ENCODE measurements at regions of chrX and their contacts with region 1.

Region 1: GRCh38 chrX:119427024-119427794 is 28.1 kb downstream of the SLC25A43 start:
- DNase-seq: no peak
- ATAC-seq: no peak
- H3K4me3 ChIP-seq: no peak overlapping the region
- H3K27ac ChIP-seq: no peak overlapping the region
- H3K4me1 ChIP-seq: no peaks in the 10 kb centered on the region
- H3K27me3 ChIP-seq: no peaks in the 10 kb centered on the region
- CTCF ChIP-seq: no peak

Region 2: GRCh38 chrX:118207831-118208453 is 1219.3 kb before region 1 on chrX:
- CTCF ChIA-PET with region 1: no interaction called
- POLR2A ChIA-PET with region 1: no interaction called
- in situ Hi-C with region 1: no loop called
- intact Hi-C with region 1: no loop called
- DNase-seq: no peak
- ATAC-seq: no peak
- H3K4me3 ChIP-seq: no peak overlapping the region
- H3K27ac ChIP-seq: no peak overlapping the region
- H3K4me1 ChIP-seq: no peaks in the 10 kb centered on the region
- H3K27me3 ChIP-seq: no peaks in the 10 kb centered on the region
- CTCF ChIP-seq: no peak

Region 3: DNA sequence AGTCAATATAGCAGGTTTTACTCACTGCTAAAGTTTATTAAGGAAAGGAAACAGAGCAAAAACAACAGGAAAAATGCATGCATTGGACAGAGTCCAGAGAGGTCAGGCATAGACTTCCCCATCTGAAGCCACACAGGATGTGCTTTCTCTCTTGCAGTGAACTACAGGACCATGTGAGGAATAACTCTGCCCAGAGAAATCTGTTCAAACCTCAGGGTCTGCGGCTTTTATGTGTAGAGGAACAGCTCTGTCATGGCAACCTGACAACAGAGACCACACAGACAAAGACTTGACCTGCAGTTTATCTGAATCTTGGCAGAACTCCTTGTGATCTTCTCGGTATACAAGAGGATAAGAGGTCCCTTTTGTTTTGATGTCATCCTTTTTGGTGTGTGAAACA is 499.1 kb before region 1 on chrX:
- CTCF ChIA-PET with region 1: no interaction called
- POLR2A ChIA-PET with region 1: no interaction called
- in situ Hi-C with region 1: no loop called
- intact Hi-C with region 1: no loop called
- DNase-seq: no peak
- ATAC-seq: no peak
- H3K4me3 ChIP-seq: no peak overlapping the region
- H3K27ac ChIP-seq: no peak overlapping the region
- H3K4me1 ChIP-seq: no peaks in the 10 kb centered on the region
- H3K27me3 ChIP-seq: no peaks in the 10 kb centered on the region
- CTCF ChIP-seq: no peak

Region 4: DNA sequence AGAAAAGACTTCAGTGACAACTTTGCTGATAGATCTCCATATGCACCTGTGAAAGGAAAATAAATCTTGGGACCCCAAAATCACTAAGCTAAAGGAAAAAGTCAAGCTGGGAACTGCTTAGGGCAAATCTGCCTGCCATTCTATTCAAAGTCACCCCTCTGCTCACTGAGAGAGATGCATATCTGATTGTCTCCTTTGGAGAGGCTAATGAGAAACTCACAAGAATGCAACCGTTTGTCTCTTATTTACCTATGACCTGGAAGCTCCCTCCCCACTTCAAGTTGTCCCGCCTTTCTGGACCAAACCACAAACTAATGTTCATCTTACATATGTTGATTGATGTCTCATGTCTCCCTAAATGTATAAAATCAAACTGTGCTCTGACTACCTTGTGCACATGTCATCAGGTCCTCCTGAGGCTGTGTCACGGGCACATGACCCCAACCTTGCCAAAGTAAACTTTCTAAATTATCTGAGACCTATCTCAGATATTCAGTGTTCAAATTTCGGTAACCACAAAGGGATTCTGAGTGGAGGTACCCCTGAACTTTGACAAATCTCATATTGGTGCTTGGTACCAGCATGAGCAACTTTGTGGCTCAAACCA is 117.4 kb before region 1 on chrX:
- CTCF ChIA-PET with region 1: no interaction called
- POLR2A ChIA-PET with region 1: interaction called, 11 read pairs
- in situ Hi-C with region 1: no loop called
- intact Hi-C with region 1: no loop called
- DNase-seq: no peak
- ATAC-seq: no peak
- H3K4me3 ChIP-seq: no peak overlapping the region
- H3K27ac ChIP-seq: no peak overlapping the region
- H3K4me1 ChIP-seq: no peaks in the 10 kb centered on the region
- H3K27me3 ChIP-seq: peaks cover 2% of the 10 kb centered on the region; the same call in 1 of the 2 replicates
- CTCF ChIP-seq: no peak

Region 5: DNA sequence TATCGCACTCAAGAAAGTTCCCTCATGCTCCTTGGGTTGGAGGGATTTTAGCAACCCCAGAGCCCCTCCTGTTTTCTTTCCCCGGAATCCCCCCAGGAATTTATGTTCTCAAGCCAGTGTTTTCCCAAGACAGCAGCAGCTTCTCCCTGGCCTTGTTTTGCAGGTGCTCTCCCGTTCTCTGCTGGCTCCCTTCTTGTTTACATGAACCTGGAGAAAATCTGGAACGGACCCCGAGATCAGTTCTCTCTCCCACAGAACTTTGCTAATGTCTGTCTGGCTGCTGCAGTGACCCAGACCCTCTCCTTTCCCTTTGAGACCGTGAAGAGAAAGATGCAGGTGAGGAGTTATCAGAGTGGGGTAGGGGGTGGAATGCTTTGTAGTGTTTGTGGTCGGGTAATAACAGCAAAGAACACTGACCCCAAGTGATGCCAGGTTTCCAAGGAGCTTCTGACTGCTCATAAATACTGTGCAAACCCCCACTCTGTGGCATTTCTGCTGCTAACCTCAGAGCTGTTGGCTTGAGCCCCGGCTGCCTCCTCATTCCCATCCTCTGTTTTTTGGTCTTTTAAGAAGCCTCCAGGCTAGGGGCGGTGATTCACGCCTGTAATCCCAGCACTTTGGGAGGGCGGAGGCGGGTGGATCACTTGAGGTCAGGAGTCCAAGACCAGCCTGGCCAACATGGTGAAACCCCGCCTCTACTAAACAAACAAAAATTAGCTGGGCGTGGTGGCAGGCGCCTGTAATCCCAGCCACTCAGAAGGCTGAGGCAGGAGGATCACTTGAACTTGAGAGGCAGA is 17.0 kb before region 1 on chrX:
- CTCF ChIA-PET with region 1: no interaction called
- POLR2A ChIA-PET with region 1: interaction called, 10 read pairs
- in situ Hi-C with region 1: no loop called
- intact Hi-C with region 1: no loop called
- DNase-seq: no peak
- ATAC-seq: no peak; the same call in 1 of the 2 replicates
- H3K4me3 ChIP-seq: 0 out of 4 replicates have a peak overlapping the region, but pooled peaks of 1 of the 2 experiments have one; percentile 6
- H3K27ac ChIP-seq: no peak overlapping the region
- H3K4me1 ChIP-seq: no peaks in the 10 kb centered on the region
- H3K27me3 ChIP-seq: no peaks in the 10 kb centered on the region
- CTCF ChIP-seq: no peak

Region 6: GRCh38 chrX:119442286-119442685 is 15.1 kb after region 1 on chrX:
- CTCF ChIA-PET with region 1: no interaction called
- POLR2A ChIA-PET with region 1: interaction called, 15 read pairs
- in situ Hi-C with region 1: no loop called
- intact Hi-C with region 1: no loop called
- DNase-seq: no peak
- ATAC-seq: no peak
- H3K4me3 ChIP-seq: no peak overlapping the region
- H3K27ac ChIP-seq: no peak overlapping the region
- H3K4me1 ChIP-seq: no peaks in the 10 kb centered on the region
- H3K27me3 ChIP-seq: no peaks in the 10 kb centered on the region
- CTCF ChIP-seq: no peak

Region 7: GRCh38 chrX:120029354-120029753 is 602.1 kb after region 1 on chrX:
- CTCF ChIA-PET with region 1: no interaction called
- POLR2A ChIA-PET with region 1: no interaction called
- in situ Hi-C with region 1: no loop called
- intact Hi-C with region 1: no loop called
- DNase-seq: no peak
- ATAC-seq: no peak
- H3K4me3 ChIP-seq: no peak overlapping the region
- H3K27ac ChIP-seq: no peak overlapping the region
- H3K4me1 ChIP-seq: no peaks in the 10 kb centered on the region
- H3K27me3 ChIP-seq: no peaks in the 10 kb centered on the region
- CTCF ChIP-seq: peak; percentile 28

Measured in Panc1 (cell line).